T-cell (primary cell): ENCODE measurements at regions of chr17 and their contacts with region 1.

Region 1: DNA sequence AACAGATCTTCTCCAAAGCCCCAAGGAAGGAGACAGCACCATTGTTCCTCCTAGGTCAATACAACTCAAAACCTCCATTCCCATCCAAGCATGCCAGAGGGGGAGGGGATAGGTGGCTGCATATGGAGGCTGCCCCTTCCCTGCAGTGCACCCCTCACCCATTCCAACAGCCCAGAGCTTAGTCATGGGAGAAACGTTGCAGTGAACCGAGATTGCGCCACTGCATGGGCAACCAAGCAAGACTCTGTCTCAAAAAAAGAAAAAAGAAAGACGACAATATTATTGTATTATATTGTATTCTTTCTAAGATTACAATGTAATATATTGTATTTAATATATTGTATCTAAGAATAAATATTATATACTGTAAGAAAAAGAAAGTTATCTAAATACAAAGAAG is 36.4 kb upstream of the CD300E start:
- DNase-seq: no peak
- ATAC-seq: no peak
- H3K4me3 ChIP-seq: no peak overlapping the region
- H3K4me3 Mint-ChIP-seq: no peak overlapping the region
- H3K27ac ChIP-seq: no peak overlapping the region
- H3K27ac Mint-ChIP-seq: no peak overlapping the region
- H3K4me1 ChIP-seq: peaks cover 0 to 7% of the 10 kb centered on the region in 2 experiments
- H3K4me1 Mint-ChIP-seq: peaks cover 3 to 6% (median 4%) of the 10 kb centered on the region in 3 donors
- H3K27me3 ChIP-seq: peaks cover 0 to 30% of the 10 kb centered on the region in 2 experiments
- H3K27me3 Mint-ChIP-seq: peaks cover 22 to 46% of the 10 kb centered on the region in 2 donors

Region 2: DNA sequence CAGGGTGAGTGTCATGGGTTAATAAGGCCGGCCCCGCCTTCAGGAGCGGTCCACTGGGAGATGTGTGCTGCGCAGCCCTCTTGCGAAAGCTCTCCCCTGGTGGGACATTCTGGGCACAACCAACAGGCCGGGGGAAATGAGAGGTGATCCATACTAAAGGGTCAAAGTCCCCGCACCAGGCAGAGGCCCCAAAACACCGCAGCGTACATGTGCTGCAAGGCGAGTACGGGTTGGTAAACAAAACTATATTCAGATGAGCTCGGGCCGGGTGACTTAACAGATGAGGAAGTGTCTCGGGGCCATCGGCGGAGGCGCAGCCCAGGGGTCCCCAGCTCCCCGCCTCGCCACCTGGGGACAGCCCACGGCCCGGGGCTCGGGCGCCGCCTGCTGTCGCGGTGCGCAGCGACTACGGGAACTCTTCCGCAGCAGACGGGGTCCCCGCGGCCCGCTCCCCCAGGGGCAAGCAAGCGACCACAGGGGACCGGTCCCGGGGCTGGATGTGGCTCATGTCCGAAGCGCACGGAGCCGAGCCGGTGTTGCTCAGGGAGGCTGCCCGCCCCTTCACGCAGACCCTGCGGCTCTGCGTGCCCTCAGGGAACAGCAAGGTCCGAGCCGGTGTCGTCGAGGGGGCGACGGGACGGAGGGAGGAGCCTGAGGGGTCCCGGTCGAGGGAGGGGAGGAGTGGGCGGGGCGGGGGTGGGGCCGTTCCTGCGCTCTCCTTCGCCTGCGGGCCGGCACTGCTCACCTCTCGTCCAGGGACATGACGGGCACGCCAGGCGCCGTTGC is 76.8 kb after region 1 on chr17 and contains the start of gene RAB37:
- CTCF ChIA-PET with region 1: interaction called, 6 to 88 read pairs
- POLR2A ChIA-PET with region 1: interaction called in 1 of 2 experiments, 3 read pairs
- DNase-seq: peak in 23 of 35 experiments; percentile 34 to 73 (median 46)
- ATAC-seq: peak; percentile 24 to 54 (median 35)
- H3K4me3 ChIP-seq: peak within 1 kb of the TSS; percentile 83 to 89
- H3K4me3 Mint-ChIP-seq: peak within 1 kb of the TSS; percentile 87 to 89 (median 87)
- H3K27ac ChIP-seq: peak within 1 kb of the TSS; percentile 80
- H3K27ac Mint-ChIP-seq: peak within 1 kb of the TSS; percentile 99 to 100
- H3K4me1 ChIP-seq: peaks cover 31 to 76% of the 10 kb centered on the region in 2 experiments
- H3K4me1 Mint-ChIP-seq: peaks cover 48 to 57% (median 54%) of the 10 kb centered on the region in 3 donors
- H3K27me3 ChIP-seq: no peaks in the 10 kb centered on the region
- H3K27me3 Mint-ChIP-seq: no peaks in the 10 kb centered on the region
- total RNA-seq, gene RAB37: 31.2 to 73.4 (median 40.7) TPM

Region 3: DNA sequence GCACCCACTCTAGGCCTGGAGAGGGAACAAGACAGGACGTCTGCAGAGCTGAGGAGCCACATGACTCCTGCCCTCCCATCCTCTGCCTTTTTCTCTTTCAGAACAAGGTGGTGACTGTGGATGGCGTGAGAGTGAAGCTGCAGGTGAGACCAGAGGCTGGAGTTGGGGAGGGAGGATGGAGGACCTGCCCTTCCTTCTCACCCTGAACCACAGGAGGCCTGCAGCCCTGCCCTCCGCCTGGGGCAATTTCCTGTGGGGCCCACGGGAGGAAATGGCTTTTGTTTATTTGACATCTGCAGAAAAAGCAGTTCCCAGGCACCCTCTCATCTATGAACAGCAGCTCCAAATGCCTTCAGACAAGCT is 82.2 kb after region 1 on chr17:
- CTCF ChIA-PET with region 1: interaction called, 7 to 88 read pairs
- POLR2A ChIA-PET with region 1: interaction called in 1 of 2 experiments, 3 read pairs
- DNase-seq: peak in 16 of 35 experiments; percentile 27 to 80 (median 48)
- ATAC-seq: peak; percentile 19 to 58 (median 47)
- H3K4me3 ChIP-seq: peak overlapping the region; percentile 19 to 49
- H3K4me3 Mint-ChIP-seq: peak overlapping the region; percentile 64 to 87 (median 67)
- H3K27ac ChIP-seq: peak overlapping the region; percentile 63
- H3K27ac Mint-ChIP-seq: peak overlapping the region; percentile 99 to 100
- H3K4me1 ChIP-seq: peaks cover 63 to 99% of the 10 kb centered on the region in 2 experiments
- H3K4me1 Mint-ChIP-seq: peaks cover 85 to 91% (median 90%) of the 10 kb centered on the region in 3 donors
- H3K27me3 ChIP-seq: no peaks in the 10 kb centered on the region
- H3K27me3 Mint-ChIP-seq: no peaks in the 10 kb centered on the region

Region 4: DNA sequence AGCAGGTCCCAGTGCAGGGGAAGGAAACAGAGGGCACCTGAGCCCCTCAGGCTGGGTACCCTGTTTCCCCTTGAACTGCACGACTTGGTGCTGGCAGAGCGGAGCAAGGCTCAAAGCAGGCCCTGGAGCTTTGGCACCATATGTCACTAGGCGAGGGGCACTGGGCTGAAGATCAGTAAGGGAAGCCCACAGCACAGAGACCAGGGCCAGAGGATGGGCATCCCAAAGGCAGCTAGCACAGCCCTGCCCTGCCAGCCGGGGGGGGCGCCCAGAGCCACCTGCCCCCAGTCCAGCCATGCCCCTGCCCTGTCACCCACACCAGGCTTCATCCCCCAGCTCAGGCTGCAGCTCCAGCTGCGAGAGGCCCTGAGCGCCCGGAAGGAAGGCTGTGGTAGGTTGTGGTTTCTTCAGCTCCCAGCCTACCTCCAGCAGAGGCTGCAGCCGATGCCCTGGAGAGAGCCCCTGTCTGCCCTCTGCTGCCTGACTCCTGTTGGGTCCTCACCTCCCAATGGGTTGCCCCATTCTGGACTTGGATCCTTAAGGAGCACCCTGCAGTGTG is 99.4 kb after region 1 on chr17:
- CTCF ChIA-PET with region 1: interaction called, 4 to 10 read pairs
- POLR2A ChIA-PET with region 1: no interaction called
- DNase-seq: peak in 28 of 35 experiments; percentile 35 to 79 (median 54)
- ATAC-seq: peak; percentile 88 to 92 (median 91)
- H3K4me3 ChIP-seq: peak overlapping the region; percentile 39 to 58
- H3K4me3 Mint-ChIP-seq: peak overlapping the region; percentile 66 to 100 (median 68)
- H3K27ac ChIP-seq: peak overlapping the region; percentile 62
- H3K27ac Mint-ChIP-seq: peak overlapping the region; percentile 92 to 94
- H3K4me1 ChIP-seq: peaks cover 43 to 98% of the 10 kb centered on the region in 2 experiments
- H3K4me1 Mint-ChIP-seq: peaks cover 58 to 81% (median 77%) of the 10 kb centered on the region in 3 donors
- H3K27me3 ChIP-seq: no peaks in the 10 kb centered on the region
- H3K27me3 Mint-ChIP-seq: no peaks in the 10 kb centered on the region

Region 5: GRCh38 chr17:74770498-74771318 is 110.8 kb after region 1 on chr17:
- CTCF ChIA-PET with region 1: interaction called, 6 to 27 read pairs
- POLR2A ChIA-PET with region 1: interaction called in 1 of 2 experiments, 8 read pairs
- DNase-seq: peak; percentile 51 to 85 (median 75)
- ATAC-seq: peak; percentile 88 to 96 (median 88)
- H3K4me3 ChIP-seq: no peak overlapping the region
- H3K4me3 Mint-ChIP-seq: no peak overlapping the region
- H3K27ac ChIP-seq: peak overlapping the region; percentile 14
- H3K27ac Mint-ChIP-seq: peak overlapping the region; percentile 84 to 86
- H3K4me1 ChIP-seq: peaks cover 0 to 62% of the 10 kb centered on the region in 2 experiments
- H3K4me1 Mint-ChIP-seq: peaks cover 37 to 48% (median 45%) of the 10 kb centered on the region in 3 donors
- H3K27me3 ChIP-seq: no peaks in the 10 kb centered on the region
- H3K27me3 Mint-ChIP-seq: no peaks in the 10 kb centered on the region

Region 6: GRCh38 chr17:74807925-74808324 is 148.0 kb after region 1 on chr17:
- CTCF ChIA-PET with region 1: interaction called in 1 of 2 experiments, 10 read pairs
- POLR2A ChIA-PET with region 1: no interaction called
- DNase-seq: no peak
- ATAC-seq: no peak
- H3K4me3 ChIP-seq: no peak overlapping the region
- H3K4me3 Mint-ChIP-seq: no peak overlapping the region
- H3K27ac ChIP-seq: no peak overlapping the region
- H3K27ac Mint-ChIP-seq: no peak overlapping the region
- H3K4me1 ChIP-seq: no peaks in the 10 kb centered on the region
- H3K4me1 Mint-ChIP-seq: peaks cover 0 to 9% (median 0%) of the 10 kb centered on the region in 3 donors
- H3K27me3 ChIP-seq: no peaks in the 10 kb centered on the region
- H3K27me3 Mint-ChIP-seq: no peaks in the 10 kb centered on the region

Region 7: DNA sequence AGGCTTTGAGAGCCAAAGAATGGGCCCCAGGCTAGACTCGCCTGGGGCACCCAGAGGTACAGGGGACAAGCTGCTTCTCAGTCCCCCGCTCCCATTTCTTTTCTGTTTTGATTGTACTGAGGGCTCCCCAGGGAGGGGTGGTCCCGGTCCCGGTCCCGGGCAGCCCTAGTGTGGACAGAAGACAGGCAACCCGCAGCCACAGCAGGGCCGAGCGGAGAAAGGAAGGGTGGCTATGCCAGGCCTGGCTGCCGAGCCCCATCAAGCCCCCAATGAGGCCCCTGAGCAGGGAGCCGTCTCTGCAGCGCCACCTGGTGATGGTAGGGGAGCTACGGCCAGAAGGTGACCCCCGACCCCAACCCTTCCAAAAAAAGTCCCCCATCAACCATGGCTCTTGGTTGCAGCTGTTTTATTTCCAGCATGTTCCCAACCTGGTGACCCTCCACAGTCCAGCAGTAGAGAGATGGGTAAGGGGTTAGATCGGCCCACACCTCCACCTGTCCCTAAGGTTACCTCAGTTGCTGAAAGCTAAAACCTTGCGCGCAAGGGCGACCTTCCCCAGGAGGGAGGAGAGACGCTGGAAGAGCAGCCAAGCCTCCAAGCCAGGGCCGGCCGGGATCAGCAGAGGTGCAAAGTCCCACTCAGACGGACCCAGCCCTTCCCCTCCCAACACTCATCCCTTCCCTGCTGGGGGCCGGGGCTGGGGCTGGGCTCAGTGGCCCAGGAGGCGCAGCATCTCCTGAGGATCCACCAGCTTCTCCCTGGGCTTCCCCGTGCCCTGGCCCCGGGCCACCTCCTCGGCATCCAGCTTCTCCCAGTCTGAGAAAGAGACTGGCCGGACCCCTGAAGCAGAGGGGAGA is 202.4 kb after region 1 on chr17:
- CTCF ChIA-PET with region 1: interaction called, 5 to 10 read pairs
- POLR2A ChIA-PET with region 1: no interaction called
- DNase-seq: peak in 34 of 35 experiments; percentile 24 to 83 (median 59)
- ATAC-seq: peak; percentile 42 to 63 (median 52)
- H3K4me3 ChIP-seq: peak overlapping the region in 1 of 2 donors; percentile 42
- H3K4me3 Mint-ChIP-seq: peak overlapping the region; percentile 31 to 61 (median 34)
- H3K27ac ChIP-seq: no peak overlapping the region
- H3K27ac Mint-ChIP-seq: no peak overlapping the region
- H3K4me1 ChIP-seq: peaks cover 11 to 36% of the 10 kb centered on the region in 2 experiments
- H3K4me1 Mint-ChIP-seq: peaks cover 18 to 30% (median 25%) of the 10 kb centered on the region in 3 donors
- H3K27me3 ChIP-seq: peaks cover 5 to 56% of the 10 kb centered on the region in 2 experiments
- H3K27me3 Mint-ChIP-seq: peaks cover 21 to 31% of the 10 kb centered on the region in 2 donors

Region 8: DNA sequence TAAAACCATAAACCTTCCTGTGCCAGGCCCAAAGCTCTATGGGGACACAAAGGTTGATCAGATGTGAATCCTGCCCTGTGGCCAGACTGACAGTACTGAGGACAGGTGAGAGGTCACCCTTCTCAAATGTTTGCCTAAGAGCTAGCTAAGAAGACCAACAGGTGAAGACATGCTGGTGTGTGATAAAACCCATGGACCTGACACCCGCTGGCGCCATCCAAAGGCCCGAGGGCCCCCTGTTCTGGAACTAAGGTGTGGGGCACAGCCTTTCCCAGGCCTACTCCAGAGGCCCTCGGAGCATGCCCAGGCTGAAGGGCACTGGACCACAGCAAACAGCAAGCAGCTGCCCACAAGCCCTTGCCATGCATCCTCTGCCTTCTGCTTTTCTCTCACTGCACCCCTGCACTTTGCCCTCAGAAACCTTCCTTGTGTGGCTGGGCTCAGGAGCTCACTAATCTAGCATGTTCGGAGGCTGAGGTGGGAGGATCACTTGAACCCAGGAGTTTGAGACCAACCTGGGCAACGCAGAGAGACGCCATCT is 1335.6 kb after region 1 on chr17:
- CTCF ChIA-PET with region 1: no interaction called
- POLR2A ChIA-PET with region 1: no interaction called
- DNase-seq: no peak
- ATAC-seq: no peak
- H3K4me3 ChIP-seq: no peak overlapping the region
- H3K4me3 Mint-ChIP-seq: no peak overlapping the region
- H3K27ac ChIP-seq: no peak overlapping the region
- H3K27ac Mint-ChIP-seq: no peak overlapping the region
- H3K4me1 ChIP-seq: peaks cover 6 to 15% of the 10 kb centered on the region in 2 experiments
- H3K4me1 Mint-ChIP-seq: peaks cover 13 to 16% (median 14%) of the 10 kb centered on the region in 3 donors
- H3K27me3 ChIP-seq: no peaks in the 10 kb centered on the region
- H3K27me3 Mint-ChIP-seq: no peaks in the 10 kb centered on the region